ENCODE measurements at regions of chr17 and their contacts with region 1.

Region 1: GRCh38 chr17:51537996-51538550 is 277.7 kb downstream of the UTP18 start:
- DNase-seq: no peak
- ATAC-seq: no peak

Region 2: DNA sequence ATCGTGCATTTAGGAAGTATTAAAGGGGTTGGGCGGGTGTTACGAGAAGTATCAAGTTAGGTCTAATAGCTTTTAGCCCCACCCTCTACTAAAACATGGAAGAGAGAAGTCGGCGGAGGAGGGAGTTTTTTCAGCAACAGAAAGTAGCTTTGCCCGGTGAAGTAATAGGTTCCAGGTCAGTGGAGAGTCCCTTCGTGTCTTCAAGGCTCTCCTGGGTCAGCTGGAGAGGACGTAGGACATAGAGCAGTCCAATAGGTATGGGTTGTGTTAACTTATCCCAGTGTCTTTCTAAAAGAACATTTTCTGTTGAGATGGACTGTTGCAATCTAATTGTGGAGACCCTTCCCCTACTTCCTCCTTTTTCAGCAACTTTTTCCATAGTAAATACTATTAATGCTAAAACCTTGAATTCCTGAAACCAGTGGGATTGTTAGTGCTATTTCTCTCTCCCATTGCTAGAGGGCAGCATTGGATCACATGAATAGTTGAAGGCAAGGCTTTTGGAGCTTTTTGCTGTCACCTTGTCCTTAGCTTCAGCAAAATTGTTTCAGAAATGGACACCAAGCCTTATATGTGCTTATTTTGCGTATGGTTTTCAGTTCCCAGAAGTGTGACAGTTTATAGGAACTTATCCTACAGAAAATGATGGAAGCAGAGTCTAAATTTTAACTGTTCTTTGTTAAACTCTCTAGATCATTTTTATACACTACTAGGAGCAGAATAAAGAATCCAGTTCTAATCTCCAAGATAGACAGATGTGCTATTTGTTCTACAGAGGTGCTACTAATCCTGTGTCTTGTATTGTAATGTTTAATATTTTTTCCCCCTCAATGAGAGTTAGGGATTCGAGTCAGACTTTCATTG is 239.3 kb before region 1 on chr17:
- intact Hi-C with region 1: loop called (anchors 2 kb)
- DNase-seq: no peak
- ATAC-seq: no peak

Region 3: GRCh38 chr17:51371732-51372151 is 166.3 kb before region 1 on chr17:
- intact Hi-C with region 1: loop called (anchors 5 kb)
- DNase-seq: no peak
- ATAC-seq: peak; percentile 61

Region 4: DNA sequence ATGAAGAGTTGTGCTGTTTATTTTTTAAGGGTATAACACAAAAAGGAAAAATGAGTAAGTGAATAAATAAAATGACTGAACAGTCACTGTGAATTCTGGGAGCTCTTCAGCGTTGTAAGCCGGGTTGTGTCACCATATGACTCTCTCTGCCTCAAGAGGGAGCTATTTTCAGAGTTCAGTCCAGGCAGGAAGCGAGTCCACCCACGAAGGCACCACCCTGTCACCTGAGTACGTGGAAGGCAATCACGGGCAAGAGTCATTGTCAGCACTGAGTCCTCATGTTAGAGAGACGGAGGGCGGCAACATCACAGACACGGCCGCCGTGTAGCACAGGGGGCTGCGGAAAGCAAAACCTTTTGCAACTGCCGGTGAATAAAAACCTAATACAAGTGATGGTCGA is 50.1 kb before region 1 on chr17:
- intact Hi-C with region 1: no loop called
- DNase-seq: no peak
- ATAC-seq: no peak

Region 5: GRCh38 chr17:51630101-51630671 is 92.1 kb after region 1 on chr17:
- intact Hi-C with region 1: no loop called
- DNase-seq: no peak
- ATAC-seq: no peak